Right ventricle myocardium superior (tissue), 1 donor: ENCODE measurements at regions of chrX and their contacts with region 1.

Region 1: GRCh38 chrX:40651620-40652223 is 4.4 kb upstream of the CXorf38 start:
- DNase-seq: peak; percentile 42
- ATAC-seq: no peak

Region 2: GRCh38 chrX:40402831-40403533 is 248.7 kb before region 1 on chrX:
- intact Hi-C with region 1: no loop called
- DNase-seq: no peak
- ATAC-seq: peak; percentile 46

Region 3: GRCh38 chrX:40792433-40792832 is 140.7 kb after region 1 on chrX:
- intact Hi-C with region 1: loop called (anchors 5 kb)
- DNase-seq: no peak
- ATAC-seq: no peak